ENCODE measurements at regions of chr17 and their contacts with region 1.

Region 1: GRCh38 chr17:81665205-81666091 is 957 bp downstream of the OXLD1 start:
- DNase-seq: peak; percentile 45
- H3K4me3 Mint-ChIP-seq: peak overlapping the region; percentile 82
- H3K27ac Mint-ChIP-seq: peak overlapping the region; percentile 62
- H3K4me1 Mint-ChIP-seq: peaks cover 23% of the 10 kb centered on the region
- H3K27me3 Mint-ChIP-seq: no peaks in the 10 kb centered on the region
- CTCF ChIP-seq: no peak

Region 2: GRCh38 chr17:81636505-81637288 is 28.8 kb before region 1 on chr17 and contains the starts of genes NPLOC4 and TSPAN10:
- CTCF ChIA-PET with region 1: no interaction called
- intact Hi-C with region 1: loop called (anchors 2 kb)
- DNase-seq: peak; percentile 90
- H3K4me3 Mint-ChIP-seq: peak within 1 kb of the TSS; percentile 83
- H3K27ac Mint-ChIP-seq: peak within 1 kb of the TSS; percentile 88
- H3K4me1 Mint-ChIP-seq: no peaks in the 10 kb centered on the region
- H3K27me3 Mint-ChIP-seq: no peaks in the 10 kb centered on the region
- CTCF ChIP-seq: no peak
- total RNA-seq, gene NPLOC4: 146 and 149 TPM in 2 replicates
- total RNA-seq, gene TSPAN10: 2.9 and 4.2 TPM in 2 replicates

Region 3: GRCh38 chr17:81733507-81734404 is 68.3 kb after region 1 on chr17:
- CTCF ChIA-PET with region 1: no interaction called
- intact Hi-C with region 1: no loop called
- DNase-seq: peak; percentile 94
- H3K4me3 Mint-ChIP-seq: peak overlapping the region; percentile 41
- H3K27ac Mint-ChIP-seq: peak overlapping the region; percentile 29
- H3K4me1 Mint-ChIP-seq: peaks cover 21% of the 10 kb centered on the region
- H3K27me3 Mint-ChIP-seq: peaks cover 24% of the 10 kb centered on the region
- CTCF ChIP-seq: peak; percentile 96

Region 4: DNA sequence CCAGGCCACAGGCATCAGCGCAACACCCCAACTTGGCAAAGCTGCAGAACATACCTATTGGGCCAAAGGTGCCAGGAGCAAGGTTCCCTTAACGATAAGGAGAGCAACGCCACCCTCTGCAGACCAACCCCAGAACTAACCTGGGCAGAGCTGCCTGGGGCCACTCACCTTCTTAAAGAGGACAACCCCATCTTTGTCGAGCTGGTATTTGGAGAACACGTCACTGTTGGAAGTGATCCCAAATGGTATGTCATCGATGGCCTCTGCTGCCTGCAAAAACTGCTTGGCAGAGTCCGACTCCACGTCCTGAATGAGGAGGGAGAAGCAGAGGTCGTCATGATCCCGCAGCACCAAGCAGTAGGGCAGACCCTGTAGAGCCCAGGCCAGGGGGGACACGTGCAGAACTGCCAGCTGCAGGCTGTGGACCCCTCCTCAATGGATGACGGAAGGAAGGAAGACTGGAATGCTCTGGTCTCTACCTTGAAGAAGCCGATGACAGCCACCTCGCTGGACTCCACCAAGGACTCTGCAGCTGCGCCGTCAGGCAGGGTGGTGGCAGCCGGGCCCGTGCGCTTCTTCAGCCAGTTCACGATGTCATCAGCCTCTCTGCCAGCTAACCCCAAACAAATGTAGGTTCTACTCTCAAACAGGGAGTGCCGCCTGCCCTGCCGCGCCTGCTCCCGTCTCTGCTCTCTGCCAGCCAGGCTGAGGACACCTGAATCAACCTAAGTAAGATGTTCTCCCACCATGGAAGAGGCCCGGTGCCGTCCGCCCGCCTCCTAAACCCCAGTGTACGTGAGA is 189.7 kb after region 1 on chr17:
- CTCF ChIA-PET with region 1: no interaction called
- intact Hi-C with region 1: no loop called
- DNase-seq: no peak
- H3K4me3 Mint-ChIP-seq: no peak overlapping the region
- H3K27ac Mint-ChIP-seq: no peak overlapping the region
- H3K4me1 Mint-ChIP-seq: peaks cover 7% of the 10 kb centered on the region
- H3K27me3 Mint-ChIP-seq: no peaks in the 10 kb centered on the region
- CTCF ChIP-seq: no peak

Measured in Calu3 (cell line).